Caco-2 (cell line): ENCODE measurements at regions of chr7 and their contacts with region 1.

Region 1: DNA sequence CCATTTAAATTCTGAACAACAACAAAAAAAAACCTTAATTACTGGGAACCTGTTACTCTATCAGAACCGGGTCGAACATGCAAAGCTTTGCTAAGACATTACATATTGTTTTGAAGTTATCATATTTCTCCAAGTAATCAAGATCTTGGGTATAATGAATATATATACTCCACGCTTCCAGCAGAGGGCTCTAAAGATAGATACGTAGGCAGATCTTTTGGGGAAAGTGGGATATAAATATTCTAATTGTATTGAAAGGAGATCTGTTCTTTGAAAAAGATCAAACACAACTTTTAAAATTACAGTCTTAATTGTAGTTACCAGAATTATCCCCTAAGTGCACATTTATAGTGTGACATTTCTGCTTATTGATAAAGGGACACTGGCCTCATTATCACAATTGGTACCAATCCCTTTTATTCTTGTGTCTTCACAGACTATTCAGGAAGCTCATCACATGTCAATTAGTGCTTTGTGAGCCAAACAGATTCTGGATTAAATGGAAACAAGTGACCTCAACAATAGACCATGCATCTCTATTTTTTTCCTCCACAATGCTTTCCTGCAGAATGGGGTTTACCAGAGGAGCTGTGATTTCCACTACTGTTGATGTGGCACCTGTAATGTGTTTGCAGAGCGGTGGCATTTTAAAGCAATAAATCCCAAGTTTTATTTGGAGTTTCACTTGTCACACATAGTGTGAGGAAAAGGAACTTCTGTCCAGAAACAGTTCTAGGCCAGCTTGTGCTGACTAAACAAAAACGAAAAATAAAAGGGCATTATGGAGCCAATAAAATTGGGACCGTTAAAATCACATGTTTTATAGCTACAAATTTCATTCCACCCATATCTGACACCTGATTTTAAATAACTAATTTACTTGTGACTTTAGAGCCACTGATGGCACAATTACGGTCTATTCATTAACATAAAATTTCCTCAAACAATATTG is 122.4 kb downstream of the CTTNBP2 start:
- DNase-seq: peak in 1 of 2 experiments; percentile 18
- H3K4me3 ChIP-seq: no peak overlapping the region
- H3K4me3 Mint-ChIP-seq: no peak overlapping the region
- H3K27ac Mint-ChIP-seq: no peak overlapping the region
- H3K4me1 ChIP-seq: no peaks in the 10 kb centered on the region
- H3K4me1 Mint-ChIP-seq: no peaks in the 10 kb centered on the region
- H3K27me3 ChIP-seq: no peaks in the 10 kb centered on the region
- H3K27me3 Mint-ChIP-seq: peaks cover 2% of the 10 kb centered on the region
- CTCF ChIP-seq: peak; percentile 54 to 61

Region 2: GRCh38 chr7:117413160-117413559 is 337.7 kb before region 1 on chr7:
- CTCF ChIA-PET with region 1: no interaction called
- POLR2A ChIA-PET with region 1: no interaction called
- intact Hi-C with region 1: no loop called
- DNase-seq: no peak
- H3K4me3 ChIP-seq: no peak overlapping the region
- H3K4me3 Mint-ChIP-seq: no peak overlapping the region
- H3K27ac Mint-ChIP-seq: no peak overlapping the region
- H3K4me1 ChIP-seq: peaks cover 8% of the 10 kb centered on the region; the same call in 1 of the 2 replicates
- H3K4me1 Mint-ChIP-seq: peaks cover 2% of the 10 kb centered on the region
- H3K27me3 ChIP-seq: no peaks in the 10 kb centered on the region
- H3K27me3 Mint-ChIP-seq: peaks cover 3% of the 10 kb centered on the region
- CTCF ChIP-seq: no peak

Region 3: DNA sequence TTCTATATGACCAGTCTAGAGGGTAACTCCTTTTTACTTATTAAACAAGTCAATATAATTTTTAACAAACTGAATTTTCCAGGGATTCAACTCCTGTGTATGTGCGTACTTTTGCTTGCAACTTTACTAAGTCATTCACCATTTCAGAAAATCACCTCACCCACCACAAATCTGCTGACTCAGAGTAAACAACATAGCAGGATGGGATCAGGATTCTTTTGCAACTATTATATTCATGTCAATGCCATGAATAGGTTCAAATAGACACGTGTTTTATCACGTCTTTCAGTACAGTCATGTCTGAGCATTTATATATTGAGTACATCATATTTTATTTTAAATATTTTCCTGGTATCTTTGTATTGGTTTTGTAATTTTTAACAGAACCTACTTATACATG is 107.8 kb after region 1 on chr7:
- CTCF ChIA-PET with region 1: no interaction called
- POLR2A ChIA-PET with region 1: no interaction called
- intact Hi-C with region 1: no loop called
- DNase-seq: no peak
- H3K4me3 ChIP-seq: no peak overlapping the region
- H3K4me3 Mint-ChIP-seq: no peak overlapping the region
- H3K27ac Mint-ChIP-seq: no peak overlapping the region
- H3K4me1 ChIP-seq: peaks cover 10% of the 10 kb centered on the region
- H3K4me1 Mint-ChIP-seq: peaks cover 8% of the 10 kb centered on the region
- H3K27me3 ChIP-seq: no peaks in the 10 kb centered on the region
- H3K27me3 Mint-ChIP-seq: no peaks in the 10 kb centered on the region
- CTCF ChIP-seq: no peak

Region 4: DNA sequence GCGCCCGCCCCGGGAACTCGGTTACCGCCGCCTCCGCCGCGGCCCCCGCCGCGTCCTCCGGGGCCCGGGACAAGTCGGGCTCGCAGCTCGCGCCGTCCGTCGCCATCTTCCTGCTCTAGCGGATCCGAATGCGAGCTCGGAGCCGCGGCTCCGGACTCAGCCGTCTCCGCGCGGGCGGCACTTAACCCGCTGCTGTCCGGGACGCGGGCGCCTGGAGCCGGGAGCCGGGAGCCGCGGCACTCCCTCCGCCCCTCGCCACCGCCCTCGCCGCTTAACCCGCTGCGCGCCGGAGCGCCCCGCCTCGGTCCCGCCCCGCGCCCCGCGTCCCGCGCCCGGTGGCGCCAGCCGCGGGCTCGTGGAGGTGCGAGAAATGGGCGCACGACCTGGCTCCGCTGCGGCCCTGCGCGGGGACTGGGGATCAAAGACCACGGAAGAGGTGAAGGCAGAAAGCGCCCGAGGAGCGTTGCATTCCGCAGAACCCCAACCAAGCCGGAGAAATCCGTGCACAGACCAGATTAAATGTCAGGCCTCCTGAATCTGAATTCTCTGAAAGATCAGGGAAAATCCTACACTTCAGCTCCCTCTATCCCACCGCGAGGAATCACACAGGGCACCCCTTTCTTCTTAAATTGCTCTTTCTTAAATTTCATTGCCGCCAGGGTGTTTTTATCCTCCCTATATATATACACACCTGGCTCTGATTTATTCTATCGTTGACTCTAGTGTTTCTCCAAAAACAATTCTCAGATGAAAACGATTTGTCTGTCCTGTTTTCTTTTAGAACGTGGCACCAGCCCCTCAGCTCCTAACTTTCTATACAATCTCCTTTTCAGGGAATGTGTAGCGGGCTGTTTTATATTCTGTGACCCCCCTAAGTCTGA is 122.7 kb after region 1 on chr7 and contains the start of gene CTTNBP2:
- CTCF ChIA-PET with region 1: no interaction called
- POLR2A ChIA-PET with region 1: no interaction called
- intact Hi-C with region 1: loop called (anchors 2 kb)
- DNase-seq: peak; percentile 43 to 60
- H3K4me3 ChIP-seq: peak within 1 kb of the TSS; percentile 62
- H3K4me3 Mint-ChIP-seq: peak within 1 kb of the TSS; percentile 91
- H3K27ac Mint-ChIP-seq: peak within 1 kb of the TSS; percentile 51
- H3K4me1 ChIP-seq: 0 out of 2 replicates have a peak, but pooled peaks cover 7% of the 10 kb centered on the region
- H3K4me1 Mint-ChIP-seq: peaks cover 13% of the 10 kb centered on the region
- H3K27me3 ChIP-seq: no peaks in the 10 kb centered on the region
- H3K27me3 Mint-ChIP-seq: peaks cover 23% of the 10 kb centered on the region
- CTCF ChIP-seq: no peak
- total RNA-seq, gene CTTNBP2: 3.2 and 3.3 TPM in 2 replicates

Region 5: DNA sequence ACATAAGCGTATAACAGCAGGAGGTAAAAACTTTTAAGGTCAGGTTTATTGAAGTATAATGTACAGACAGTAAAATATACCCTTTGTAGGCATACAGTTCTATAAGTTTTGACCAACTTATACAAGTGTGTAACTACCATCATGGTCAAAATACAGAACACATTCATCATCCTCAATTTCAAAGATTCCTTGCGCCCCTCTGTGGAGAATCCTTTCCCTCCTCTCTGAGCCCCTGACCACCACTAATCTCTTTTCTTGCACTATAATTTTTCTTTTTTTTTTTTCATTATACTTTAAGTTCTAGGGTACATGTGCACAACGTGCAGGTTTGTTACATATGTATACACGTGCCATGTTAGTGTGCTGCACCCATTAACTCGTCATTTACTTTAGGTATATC is 180.4 kb after region 1 on chr7:
- CTCF ChIA-PET with region 1: no interaction called
- POLR2A ChIA-PET with region 1: no interaction called
- intact Hi-C with region 1: loop called (anchors 1 kb)
- DNase-seq: no peak
- H3K4me3 ChIP-seq: no peak overlapping the region
- H3K4me3 Mint-ChIP-seq: no peak overlapping the region
- H3K27ac Mint-ChIP-seq: no peak overlapping the region
- H3K4me1 ChIP-seq: no peaks in the 10 kb centered on the region
- H3K4me1 Mint-ChIP-seq: no peaks in the 10 kb centered on the region
- H3K27me3 ChIP-seq: no peaks in the 10 kb centered on the region
- H3K27me3 Mint-ChIP-seq: no peaks in the 10 kb centered on the region
- CTCF ChIP-seq: no peak

Region 6: DNA sequence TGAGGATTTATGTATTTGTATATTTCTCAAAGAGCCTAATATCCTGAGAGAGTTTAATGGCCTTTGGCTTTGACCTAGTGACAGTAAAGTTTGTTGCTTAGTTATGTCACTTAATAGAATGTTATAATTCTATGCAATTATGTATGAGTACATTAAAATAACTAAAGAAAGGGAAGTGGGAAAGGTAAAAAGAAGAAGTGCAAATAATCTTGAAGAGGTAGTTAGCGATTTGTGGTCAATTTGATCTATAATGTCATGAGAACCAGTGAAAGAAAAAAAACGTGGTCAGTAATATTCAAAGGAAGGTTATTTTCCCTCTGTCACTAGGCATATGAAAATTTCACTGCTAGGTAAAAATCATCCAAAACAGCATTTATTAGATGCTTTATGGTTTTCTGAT is 289.7 kb after region 1 on chr7:
- CTCF ChIA-PET with region 1: no interaction called
- POLR2A ChIA-PET with region 1: no interaction called
- intact Hi-C with region 1: loop called (anchors 10 kb)
- DNase-seq: no peak
- H3K4me3 ChIP-seq: no peak overlapping the region
- H3K4me3 Mint-ChIP-seq: no peak overlapping the region
- H3K27ac Mint-ChIP-seq: no peak overlapping the region
- H3K4me1 ChIP-seq: no peaks in the 10 kb centered on the region
- H3K4me1 Mint-ChIP-seq: no peaks in the 10 kb centered on the region
- H3K27me3 ChIP-seq: no peaks in the 10 kb centered on the region
- H3K27me3 Mint-ChIP-seq: peaks cover 5% of the 10 kb centered on the region
- CTCF ChIP-seq: no peak

Region 7: GRCh38 chr7:118104812-118105441 is 354.0 kb after region 1 on chr7:
- CTCF ChIA-PET with region 1: no interaction called
- POLR2A ChIA-PET with region 1: no interaction called
- intact Hi-C with region 1: loop called (anchors 1 kb)
- DNase-seq: peak in 1 of 2 experiments; percentile 7
- H3K4me3 ChIP-seq: no peak overlapping the region
- H3K4me3 Mint-ChIP-seq: no peak overlapping the region
- H3K27ac Mint-ChIP-seq: no peak overlapping the region
- H3K4me1 ChIP-seq: no peaks in the 10 kb centered on the region
- H3K4me1 Mint-ChIP-seq: no peaks in the 10 kb centered on the region
- H3K27me3 ChIP-seq: no peaks in the 10 kb centered on the region
- H3K27me3 Mint-ChIP-seq: peaks cover 2% of the 10 kb centered on the region
- CTCF ChIP-seq: peak in 1 of 2 experiments; percentile 43

Region 8: GRCh38 chr7:118153551-118154177 is 402.8 kb after region 1 on chr7:
- CTCF ChIA-PET with region 1: no interaction called
- POLR2A ChIA-PET with region 1: no interaction called
- intact Hi-C with region 1: loop called (anchors 1 kb)
- DNase-seq: peak in 1 of 2 experiments; percentile 48
- H3K4me3 ChIP-seq: no peak overlapping the region
- H3K4me3 Mint-ChIP-seq: no peak overlapping the region
- H3K27ac Mint-ChIP-seq: no peak overlapping the region
- H3K4me1 ChIP-seq: no peaks in the 10 kb centered on the region
- H3K4me1 Mint-ChIP-seq: no peaks in the 10 kb centered on the region
- H3K27me3 ChIP-seq: no peaks in the 10 kb centered on the region
- H3K27me3 Mint-ChIP-seq: peaks cover 23% of the 10 kb centered on the region
- CTCF ChIP-seq: peak; percentile 38 to 76

Region 9: GRCh38 chr7:118195837-118196474 is 445.1 kb after region 1 on chr7:
- CTCF ChIA-PET with region 1: no interaction called
- POLR2A ChIA-PET with region 1: no interaction called
- intact Hi-C with region 1: loop called (anchors 1 kb)
- DNase-seq: peak in 1 of 2 experiments; percentile 73
- H3K4me3 ChIP-seq: no peak overlapping the region
- H3K4me3 Mint-ChIP-seq: no peak overlapping the region
- H3K27ac Mint-ChIP-seq: no peak overlapping the region
- H3K4me1 ChIP-seq: no peaks in the 10 kb centered on the region
- H3K4me1 Mint-ChIP-seq: no peaks in the 10 kb centered on the region
- H3K27me3 ChIP-seq: no peaks in the 10 kb centered on the region
- H3K27me3 Mint-ChIP-seq: no peaks in the 10 kb centered on the region
- CTCF ChIP-seq: peak; percentile 69 to 76